AG04450 (cell line): ENCODE measurements at regions of chr5 and their contacts with region 1.

Region 1: GRCh38 chr5:141488591-141489561 is at the start of gene PCDHGC5:
- DNase-seq: peak; percentile 56
- H3K4me3 ChIP-seq: peak within 1 kb of the TSS; percentile 38
- H3K27ac ChIP-seq: peak within 1 kb of the TSS; percentile 65
- H3K27me3 ChIP-seq: no peaks in the 10 kb centered on the region
- CTCF ChIP-seq: no peak
- polyA plus RNA-seq, gene PCDHGC5: 2.4 and 2.5 TPM in 2 replicates

Region 2: DNA sequence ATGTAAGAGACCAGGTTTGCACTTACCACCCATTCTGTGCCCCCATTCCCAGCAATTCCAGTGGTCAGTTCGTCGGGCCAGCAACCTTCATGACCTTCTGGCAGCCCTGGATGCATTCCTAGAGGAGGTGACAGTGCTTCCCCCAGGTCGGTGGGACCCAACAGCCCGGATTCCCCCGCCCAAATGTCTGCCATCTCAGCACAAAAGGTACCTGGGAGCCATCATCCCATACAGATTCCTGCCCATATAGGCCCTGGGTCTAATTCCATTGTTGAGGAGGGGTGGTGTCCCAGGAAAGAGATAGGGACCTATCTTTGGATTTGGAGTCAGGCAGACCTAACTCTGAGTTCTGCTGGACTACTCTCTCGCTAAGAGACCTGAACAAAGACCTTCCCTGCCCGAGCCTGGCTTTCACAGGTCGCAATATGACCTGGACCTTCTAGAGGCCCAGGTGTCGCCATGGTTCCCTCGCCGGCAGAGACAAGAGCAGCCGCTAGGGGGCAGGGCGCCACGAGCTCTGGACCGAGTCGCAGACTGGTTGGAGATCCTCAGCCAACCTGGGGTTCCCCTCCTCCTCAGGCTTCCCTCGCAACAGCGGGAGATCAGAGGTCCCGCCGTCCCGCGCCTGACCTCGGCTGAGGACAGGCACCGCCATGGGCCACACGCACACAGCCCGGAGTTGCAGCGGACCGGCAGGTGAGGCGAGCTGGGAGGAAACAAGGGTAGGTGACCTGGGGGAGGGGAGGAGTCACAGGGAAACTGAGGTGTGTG is 1125.8 kb before region 1 on chr5:
- CTCF ChIA-PET with region 1: interaction called, 13 read pairs
- POLR2A ChIA-PET with region 1: no interaction called
- DNase-seq: no peak
- H3K4me3 ChIP-seq: peak overlapping the region; percentile 47
- H3K27ac ChIP-seq: no peak overlapping the region
- H3K27me3 ChIP-seq: peaks cover 9% of the 10 kb centered on the region
- CTCF ChIP-seq: peak; percentile 90

Region 3: GRCh38 chr5:141430332-141431113 is 58.4 kb before region 1 on chr5 and contains the start of gene PCDHGA12:
- CTCF ChIA-PET with region 1: no interaction called
- POLR2A ChIA-PET with region 1: no interaction called
- DNase-seq: no peak
- H3K4me3 ChIP-seq: peak within 1 kb of the TSS; percentile 37
- H3K27ac ChIP-seq: peak within 1 kb of the TSS; percentile 52
- H3K27me3 ChIP-seq: no peaks in the 10 kb centered on the region
- CTCF ChIP-seq: peak; percentile 43; the same call in 1 of the 2 replicates
- polyA plus RNA-seq, gene PCDHGA12: 3.4 and 4.3 TPM in 2 replicates